AG04449 (cell line): ENCODE measurements at regions of chr6 and their contacts with region 1.

Region 1: DNA sequence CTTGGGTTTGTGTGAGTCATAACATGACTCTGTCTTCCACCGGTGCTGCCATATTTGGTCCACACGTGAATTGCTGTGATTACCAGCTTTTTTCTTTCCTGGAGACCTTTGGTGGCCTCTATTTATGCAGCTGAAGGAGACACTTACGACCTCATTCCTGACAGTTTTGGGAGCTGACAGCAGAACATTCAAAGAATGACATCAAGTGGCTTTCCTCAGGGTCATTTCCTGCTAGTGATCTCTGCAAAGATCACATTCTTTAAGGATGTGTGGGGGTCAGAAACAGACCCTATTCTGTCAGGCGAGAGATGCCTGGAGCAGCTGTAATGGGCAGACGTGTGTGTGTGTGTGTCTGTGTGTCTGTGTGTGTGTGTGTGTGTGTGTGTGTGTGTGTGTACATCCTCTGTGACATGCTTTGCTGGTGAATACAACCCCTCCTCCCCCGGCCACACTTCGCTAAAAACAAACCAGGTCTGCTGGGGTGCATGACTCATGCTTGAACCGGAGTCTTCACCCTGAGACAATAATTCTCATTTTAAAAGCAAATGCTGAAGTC is 115.6 kb downstream of the TMEM170B start:
- DNase-seq: peak; percentile 90
- H3K4me3 ChIP-seq: no peak overlapping the region
- CTCF ChIP-seq: no peak

Region 2: GRCh38 chr6:11585426-11586016 is 67.6 kb before region 1 on chr6:
- CTCF ChIA-PET with region 1: interaction called, 75 read pairs
- POLR2A ChIA-PET with region 1: interaction called, 3 read pairs
- DNase-seq: no peak
- H3K4me3 ChIP-seq: no peak overlapping the region
- CTCF ChIP-seq: peak; percentile 50

Region 3: GRCh38 chr6:11632795-11633511 is 20.2 kb before region 1 on chr6:
- CTCF ChIA-PET with region 1: interaction called, 14 read pairs
- POLR2A ChIA-PET with region 1: no interaction called
- DNase-seq: peak; percentile 58
- H3K4me3 ChIP-seq: no peak overlapping the region
- CTCF ChIP-seq: no peak

Region 4: DNA sequence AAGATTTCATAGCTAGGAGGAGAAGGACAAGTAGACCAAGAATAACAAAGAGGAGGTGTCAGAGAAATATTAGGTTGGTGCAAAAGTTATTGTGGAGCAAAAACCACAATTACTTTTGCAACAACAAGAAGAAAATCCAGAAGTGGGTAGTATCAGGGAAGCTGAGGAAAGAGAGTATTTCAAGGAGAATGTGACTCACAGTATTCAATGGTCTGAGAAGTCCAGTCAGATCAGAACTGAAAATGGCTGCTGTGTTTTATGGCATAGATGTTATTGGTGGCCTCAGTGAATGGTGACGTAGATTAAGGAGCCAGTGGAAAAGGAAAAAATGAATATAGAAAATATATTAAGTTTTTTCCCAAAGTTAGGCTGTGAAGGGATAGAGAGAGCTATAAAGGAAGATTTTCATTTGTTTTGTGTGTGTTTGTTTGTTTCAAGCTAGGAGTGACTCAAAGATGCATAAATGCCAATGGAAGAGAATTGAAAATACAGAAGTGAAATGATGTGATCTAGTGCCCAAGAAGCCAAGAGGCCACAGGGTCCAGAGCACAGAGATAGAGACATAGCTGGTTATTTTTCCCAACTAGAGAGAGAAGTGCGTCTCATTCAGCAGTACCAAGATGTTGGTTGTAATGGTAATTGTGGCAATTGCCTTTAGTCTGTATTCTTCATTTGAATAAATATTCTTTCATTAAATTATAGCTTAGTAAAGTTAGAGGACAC is 12.7 kb after region 1 on chr6:
- CTCF ChIA-PET with region 1: interaction called, 47 read pairs
- POLR2A ChIA-PET with region 1: no interaction called
- DNase-seq: no peak
- H3K4me3 ChIP-seq: no peak overlapping the region
- CTCF ChIP-seq: no peak

Region 5: DNA sequence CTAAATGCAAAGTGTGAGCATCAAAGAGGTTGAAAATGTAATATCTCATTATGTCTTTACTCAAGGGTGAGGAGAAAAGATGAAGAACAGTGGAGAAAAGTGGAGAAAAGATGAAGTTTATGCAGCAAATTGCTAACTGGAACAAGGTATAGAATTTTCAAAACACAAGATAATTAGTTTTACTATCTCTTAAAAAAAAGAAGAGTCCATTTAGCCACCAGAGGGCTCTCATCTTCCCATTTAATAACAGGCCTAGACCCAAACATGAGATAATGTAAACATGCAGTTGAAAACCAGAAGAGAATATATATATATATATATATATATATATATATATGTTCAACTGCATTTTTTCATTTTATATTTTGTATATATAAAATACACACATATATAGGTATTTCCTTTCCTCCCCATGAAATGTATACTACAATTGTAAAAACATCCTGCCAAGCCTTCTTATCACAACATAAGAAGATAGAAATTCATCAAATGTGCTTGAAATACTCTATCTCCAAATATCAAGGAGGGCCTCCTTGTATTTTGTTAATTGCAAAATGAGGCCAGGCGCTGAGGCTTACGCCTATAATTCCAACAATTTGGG is 47.1 kb after region 1 on chr6:
- CTCF ChIA-PET with region 1: no interaction called
- POLR2A ChIA-PET with region 1: no interaction called
- DNase-seq: no peak
- H3K4me3 ChIP-seq: no peak overlapping the region
- CTCF ChIP-seq: peak; percentile 21

Region 6: DNA sequence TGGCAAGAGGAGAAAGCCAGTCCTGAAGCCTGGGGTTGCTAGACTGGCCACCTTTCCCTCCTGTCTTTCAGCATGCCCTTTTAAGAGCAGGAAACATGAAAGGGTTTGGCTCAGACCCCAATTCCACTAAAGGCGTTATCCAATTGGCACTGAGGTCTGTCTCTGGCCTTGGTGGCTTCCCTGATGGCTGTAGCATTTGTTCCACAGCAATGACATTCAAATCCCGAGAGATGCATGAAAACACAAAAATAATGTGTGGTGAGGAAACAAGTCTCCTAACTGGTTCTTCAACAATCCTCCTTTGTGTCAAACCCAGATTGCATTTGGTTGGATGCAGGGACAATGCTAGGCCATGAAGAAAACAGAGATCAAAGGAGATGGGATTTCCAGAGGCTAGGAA is 182.0 kb after region 1 on chr6:
- CTCF ChIA-PET with region 1: no interaction called
- POLR2A ChIA-PET with region 1: no interaction called
- DNase-seq: no peak
- H3K4me3 ChIP-seq: no peak overlapping the region
- CTCF ChIP-seq: no peak

Region 7: GRCh38 chr6:12011276-12012076 is 358.4 kb after region 1 on chr6:
- CTCF ChIA-PET with region 1: interaction called, 18 read pairs
- POLR2A ChIA-PET with region 1: no interaction called
- DNase-seq: peak; percentile 78
- H3K4me3 ChIP-seq: peak overlapping the region; percentile 91
- CTCF ChIP-seq: no peak

Region 8: GRCh38 chr6:12233693-12234571 is 580.8 kb after region 1 on chr6:
- CTCF ChIA-PET with region 1: interaction called, 57 read pairs
- POLR2A ChIA-PET with region 1: interaction called, 5 read pairs
- DNase-seq: peak; percentile 46
- H3K4me3 ChIP-seq: no peak overlapping the region
- CTCF ChIP-seq: peak; percentile 60